A549 (cell line): ENCODE measurements at regions of chr15 and their contacts with region 1.

Region 1: DNA sequence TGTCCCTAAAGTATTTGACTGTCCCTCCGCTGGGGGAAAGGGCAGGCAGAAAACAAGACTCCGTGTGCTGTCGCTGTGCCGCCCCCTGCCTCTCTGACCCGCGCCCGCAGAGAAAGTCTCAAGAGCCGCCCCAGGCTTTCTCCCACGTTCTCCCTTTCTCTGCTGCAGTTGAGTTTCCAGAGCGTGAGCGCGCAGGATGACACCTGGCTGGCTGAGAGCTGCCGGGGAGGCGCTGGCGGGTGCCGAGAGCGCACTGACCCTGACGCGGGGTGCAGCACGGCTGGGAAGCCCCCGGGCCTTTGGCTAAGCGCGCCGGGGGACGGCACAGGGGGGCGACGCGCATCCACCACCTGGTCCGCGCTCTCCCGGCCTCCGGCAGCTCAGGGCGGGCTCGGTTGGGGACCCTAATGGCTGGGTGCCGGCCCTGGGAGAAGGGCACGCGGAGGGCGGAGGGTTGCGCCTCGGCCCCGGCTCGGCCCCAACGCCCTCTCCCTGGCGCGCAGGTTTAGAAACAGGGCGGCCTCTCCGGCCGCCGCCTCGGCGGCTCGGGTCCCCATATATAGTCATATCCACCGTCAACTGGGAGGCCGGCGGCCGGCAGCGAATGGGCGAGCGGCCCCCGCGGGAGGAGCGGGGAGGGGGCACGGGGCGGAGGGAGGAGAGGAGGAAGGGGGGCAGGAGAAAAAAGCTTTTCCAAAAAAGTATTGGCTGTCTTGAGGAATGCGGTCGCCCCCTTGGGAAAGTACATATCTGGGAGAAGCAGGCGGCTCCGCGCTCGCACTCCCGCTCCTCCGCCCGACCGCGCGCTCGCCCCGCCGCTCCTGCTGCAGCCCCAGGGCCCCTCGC is at the start of gene TPM1:
- DNase-seq: peak; percentile 92 to 95
- ATAC-seq: peak; percentile 76 to 84
- H3K4me3 ChIP-seq: peak within 1 kb of the TSS; percentile 87
- H3K27ac ChIP-seq: peak within 1 kb of the TSS; percentile 94 to 97
- H3K4me1 ChIP-seq: peaks cover 41% of the 10 kb centered on the region
- CTCF ChIP-seq: peak; percentile 13; the same call in 2 of the 3 replicates
- EP300 ChIP-seq: no peak
- POLR2A ChIP-seq: peak; percentile 94
- RAD21 ChIP-seq: peak; percentile 39 to 68
- polyA plus RNA-seq, gene TPM1: 777 and 894 TPM in 2 replicates

Region 2: DNA sequence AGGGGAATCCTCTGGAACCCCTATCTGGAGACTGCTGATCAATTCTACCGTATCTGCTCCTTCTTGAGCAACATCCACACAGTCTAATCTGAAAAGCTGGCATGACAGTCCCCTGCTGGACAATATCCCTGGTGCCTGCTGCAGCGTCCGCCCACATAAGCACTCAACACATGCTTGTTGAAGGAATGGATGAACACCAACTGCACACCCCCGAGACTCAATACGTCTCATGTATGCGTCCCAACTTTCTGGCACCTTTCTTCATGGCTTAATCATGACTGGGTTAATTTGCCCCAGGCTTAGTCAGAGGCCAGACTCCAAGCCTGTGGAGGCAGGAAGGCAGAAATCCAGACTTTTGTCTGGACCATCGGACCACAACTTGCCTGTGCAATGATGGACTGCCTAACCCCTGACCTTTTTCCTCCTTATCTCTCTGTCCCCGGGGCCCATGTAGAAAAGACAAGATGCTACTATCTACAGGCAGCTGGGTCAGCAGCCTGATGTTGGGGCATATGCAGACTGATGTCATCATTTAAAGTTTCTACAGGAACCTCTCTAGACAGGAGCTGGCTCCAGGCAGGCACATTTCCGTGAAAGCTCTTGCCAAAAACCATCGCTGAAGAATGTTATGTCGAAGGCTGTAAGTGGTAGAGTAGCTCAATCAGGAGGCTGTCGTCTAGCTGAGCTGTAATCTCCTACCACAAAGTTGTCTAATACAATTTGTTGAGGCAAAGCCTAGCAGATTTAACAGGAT is 113.8 kb before region 1 on chr15:
- CTCF ChIA-PET with region 1: interaction called, 30 read pairs
- POLR2A ChIA-PET with region 1: interaction called, 11 read pairs
- DNase-seq: peak; percentile 76 to 87
- ATAC-seq: peak; percentile 88 to 93
- H3K4me3 ChIP-seq: no peak overlapping the region
- H3K27ac ChIP-seq: peak overlapping the region; percentile 79 to 89
- H3K4me1 ChIP-seq: peaks cover 42% of the 10 kb centered on the region
- CTCF ChIP-seq: peak; percentile 49; the same call in 2 of the 3 replicates
- EP300 ChIP-seq: peak; percentile 66 to 68; a peak in 3 of 5 replicates
- POLR2A ChIP-seq: no peak
- RAD21 ChIP-seq: peak; percentile 61 to 65

Region 3: GRCh38 chr15:62977952-62978811 is 64.0 kb before region 1 on chr15:
- CTCF ChIA-PET with region 1: interaction called, 21 read pairs
- POLR2A ChIA-PET with region 1: interaction called, 9 read pairs
- DNase-seq: peak in 1 of 2 experiments; percentile 61
- ATAC-seq: peak; percentile 48 to 58; a peak in 5 of 6 replicates
- H3K4me3 ChIP-seq: no peak overlapping the region
- H3K27ac ChIP-seq: peak overlapping the region; percentile 41 to 73
- H3K4me1 ChIP-seq: peaks cover 50% of the 10 kb centered on the region
- CTCF ChIP-seq: no peak
- EP300 ChIP-seq: no peak
- POLR2A ChIP-seq: no peak
- RAD21 ChIP-seq: no peak

Region 4: GRCh38 chr15:63006032-63006878 is 35.9 kb before region 1 on chr15:
- CTCF ChIA-PET with region 1: no interaction called
- POLR2A ChIA-PET with region 1: no interaction called
- DNase-seq: no peak
- ATAC-seq: peak in 1 of 2 experiments; percentile 34; a peak in 2 of 6 replicates
- H3K4me3 ChIP-seq: no peak overlapping the region
- H3K27ac ChIP-seq: peak overlapping the region in 1 of 2 experiments; percentile 28; a peak in 1 of 6 replicates
- H3K4me1 ChIP-seq: no peaks in the 10 kb centered on the region
- CTCF ChIP-seq: no peak
- EP300 ChIP-seq: no peak
- POLR2A ChIP-seq: no peak
- RAD21 ChIP-seq: no peak

Region 5: GRCh38 chr15:63166219-63166618 is 124.0 kb after region 1 on chr15:
- CTCF ChIA-PET with region 1: no interaction called
- POLR2A ChIA-PET with region 1: no interaction called
- DNase-seq: peak in 1 of 2 experiments; percentile 36
- ATAC-seq: no peak; a peak in 1 of 6 replicates
- H3K4me3 ChIP-seq: no peak overlapping the region
- H3K27ac ChIP-seq: no peak overlapping the region
- H3K4me1 ChIP-seq: no peaks in the 10 kb centered on the region
- CTCF ChIP-seq: no peak
- EP300 ChIP-seq: no peak
- POLR2A ChIP-seq: no peak
- RAD21 ChIP-seq: 0 out of 5 replicates have a peak, but pooled peaks of 1 of the 2 experiments have one; percentile 8

Region 6: GRCh38 chr15:63212050-63213004 is 170.1 kb after region 1 on chr15:
- CTCF ChIA-PET with region 1: no interaction called
- POLR2A ChIA-PET with region 1: no interaction called
- DNase-seq: no peak
- ATAC-seq: peak in 1 of 2 experiments; percentile 48; a peak in 3 of 6 replicates
- H3K4me3 ChIP-seq: no peak overlapping the region
- H3K27ac ChIP-seq: peak overlapping the region in 1 of 2 experiments; percentile 29; a peak in 3 of 6 replicates
- H3K4me1 ChIP-seq: peaks cover 19% of the 10 kb centered on the region
- CTCF ChIP-seq: no peak
- EP300 ChIP-seq: no peak
- POLR2A ChIP-seq: no peak
- RAD21 ChIP-seq: no peak